MCF 10A (cell line): ENCODE measurements at regions of chr3 and their contacts with region 1.

Region 1: DNA sequence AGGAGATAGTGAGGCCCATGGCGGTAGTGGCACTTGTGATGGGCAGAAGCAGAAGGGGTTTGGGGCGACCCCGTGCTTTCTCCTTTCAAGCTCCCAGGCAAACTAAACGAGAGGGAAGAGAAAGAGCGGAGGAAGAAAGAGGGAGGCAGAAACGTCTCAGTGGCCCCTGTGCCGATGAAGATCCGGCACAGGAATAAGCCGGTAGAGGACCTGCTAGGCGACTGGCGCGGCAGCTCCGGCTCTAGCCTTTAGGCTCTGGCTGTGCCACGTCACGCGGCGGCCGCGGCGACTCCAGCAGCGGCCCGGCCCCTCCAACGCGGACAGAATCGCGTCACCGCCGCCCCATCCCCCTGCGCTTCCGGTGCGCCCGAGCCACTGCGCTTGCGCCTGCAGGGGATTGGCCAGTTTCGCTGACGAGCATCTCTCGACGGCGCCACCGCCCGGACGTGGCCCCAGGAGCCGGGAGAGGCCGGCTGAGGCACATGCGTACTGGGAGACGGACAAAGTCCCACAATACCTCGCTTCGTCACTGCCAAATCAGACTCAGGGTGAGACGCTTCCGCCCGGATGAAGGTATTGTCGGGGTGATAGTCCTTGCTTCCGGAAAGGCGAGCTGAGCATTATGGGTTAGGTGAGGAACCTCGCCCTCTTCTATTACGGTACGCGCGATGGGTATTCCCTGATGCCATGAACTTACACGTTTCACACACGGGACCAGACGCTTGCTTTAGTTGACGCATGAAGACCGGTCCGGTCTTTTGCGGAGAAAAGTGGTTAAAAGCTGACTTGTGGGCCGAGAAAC is at the start of gene ARF4:
- DNase-seq: peak; percentile 100
- H3K4me3 Mint-ChIP-seq: peak within 1 kb of the TSS; percentile 86
- H3K27ac Mint-ChIP-seq: peak within 1 kb of the TSS; percentile 100
- H3K4me1 Mint-ChIP-seq: peaks cover 31% of the 10 kb centered on the region
- H3K27me3 Mint-ChIP-seq: no peaks in the 10 kb centered on the region
- CTCF ChIP-seq: no peak
- total RNA-seq, gene ARF4: 275 and 396 TPM in 2 replicates

Region 2: DNA sequence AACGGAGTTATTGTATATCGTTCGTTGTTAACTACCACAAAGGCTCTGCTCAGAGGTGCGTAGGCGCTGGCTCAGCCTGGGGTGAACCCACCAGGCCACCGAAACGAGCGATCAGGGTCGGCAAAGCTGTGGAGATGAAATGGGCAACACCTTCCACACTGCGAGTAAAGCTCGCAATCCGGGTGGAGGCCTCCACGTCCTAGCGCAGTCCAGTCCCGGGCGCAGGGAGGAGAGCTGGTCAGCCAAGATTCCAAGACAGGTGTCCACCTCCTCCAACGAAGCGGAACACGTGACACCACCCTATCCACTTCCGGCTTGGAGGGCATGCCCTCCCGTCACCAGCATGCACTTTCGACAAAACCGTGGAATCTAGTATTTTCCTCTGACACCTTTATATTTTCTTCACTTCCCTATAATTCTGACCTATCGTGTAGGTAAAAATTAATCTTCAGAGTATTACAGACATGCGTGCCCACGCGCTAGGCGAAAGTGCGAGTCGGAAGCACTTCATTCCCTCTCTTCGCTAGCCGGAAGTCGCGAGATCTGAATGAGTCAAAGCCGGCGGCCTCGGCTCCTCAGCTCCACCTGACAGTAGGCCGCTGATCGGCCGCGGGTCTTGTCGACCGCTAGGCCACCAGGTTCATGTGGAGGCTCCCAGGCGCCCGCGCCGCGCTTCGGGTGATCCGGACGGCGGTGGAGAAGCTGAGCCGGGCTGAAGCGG is 41.4 kb before region 1 on chr3 and contains the start of gene PDE12:
- CTCF ChIA-PET with region 1: interaction called, 6 read pairs
- POLR2A ChIA-PET with region 1: interaction called, 153 read pairs
- intact Hi-C with region 1: loop called (anchors 5 kb)
- DNase-seq: peak; percentile 92
- H3K4me3 Mint-ChIP-seq: peak within 1 kb of the TSS; percentile 63
- H3K27ac Mint-ChIP-seq: peak within 1 kb of the TSS; percentile 96
- H3K4me1 Mint-ChIP-seq: peaks cover 12% of the 10 kb centered on the region
- H3K27me3 Mint-ChIP-seq: no peaks in the 10 kb centered on the region
- CTCF ChIP-seq: no peak
- total RNA-seq, gene PDE12: 23.0 and 23.1 TPM in 2 replicates

Region 3: GRCh38 chr3:57582474-57583168 is 14.7 kb before region 1 on chr3:
- CTCF ChIA-PET with region 1: interaction called, 6 read pairs
- POLR2A ChIA-PET with region 1: interaction called, 44 read pairs
- intact Hi-C with region 1: no loop called
- DNase-seq: peak; percentile 89
- H3K4me3 Mint-ChIP-seq: peak overlapping the region; percentile 19
- H3K27ac Mint-ChIP-seq: peak overlapping the region; percentile 46
- H3K4me1 Mint-ChIP-seq: peaks cover 10% of the 10 kb centered on the region
- H3K27me3 Mint-ChIP-seq: no peaks in the 10 kb centered on the region
- CTCF ChIP-seq: peak; percentile 11

Region 4: DNA sequence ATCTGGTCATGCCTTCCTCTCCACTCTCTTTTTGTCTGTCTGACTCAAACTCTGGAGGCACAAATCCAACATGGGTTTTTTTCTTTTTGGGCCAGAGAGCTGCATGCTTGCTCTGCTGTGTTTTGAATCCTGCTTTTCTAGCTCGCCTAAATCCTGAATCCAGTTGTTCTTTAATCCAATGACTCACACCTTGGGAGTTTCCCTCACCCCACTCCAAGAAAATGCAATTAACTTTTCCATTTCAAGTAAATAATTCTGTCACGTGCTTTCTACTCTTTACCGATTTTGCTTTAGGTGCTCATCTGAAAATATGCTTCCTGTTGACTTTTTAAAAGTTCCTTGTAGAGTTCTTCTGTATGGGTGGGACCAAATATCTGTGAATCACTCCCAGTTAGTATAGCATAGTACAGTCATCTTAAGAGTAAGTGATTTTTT is 206.3 kb after region 1 on chr3:
- CTCF ChIA-PET with region 1: no interaction called
- POLR2A ChIA-PET with region 1: interaction called, 15 read pairs
- intact Hi-C with region 1: no loop called
- DNase-seq: peak; percentile 97
- H3K4me3 Mint-ChIP-seq: peak overlapping the region; percentile 67
- H3K27ac Mint-ChIP-seq: peak overlapping the region; percentile 85
- H3K4me1 Mint-ChIP-seq: peaks cover 60% of the 10 kb centered on the region
- H3K27me3 Mint-ChIP-seq: no peaks in the 10 kb centered on the region
- CTCF ChIP-seq: no peak